Tibial artery (tissue), 4 donors: ENCODE measurements at regions of chr1 and their contacts with region 1.

Region 1: DNA sequence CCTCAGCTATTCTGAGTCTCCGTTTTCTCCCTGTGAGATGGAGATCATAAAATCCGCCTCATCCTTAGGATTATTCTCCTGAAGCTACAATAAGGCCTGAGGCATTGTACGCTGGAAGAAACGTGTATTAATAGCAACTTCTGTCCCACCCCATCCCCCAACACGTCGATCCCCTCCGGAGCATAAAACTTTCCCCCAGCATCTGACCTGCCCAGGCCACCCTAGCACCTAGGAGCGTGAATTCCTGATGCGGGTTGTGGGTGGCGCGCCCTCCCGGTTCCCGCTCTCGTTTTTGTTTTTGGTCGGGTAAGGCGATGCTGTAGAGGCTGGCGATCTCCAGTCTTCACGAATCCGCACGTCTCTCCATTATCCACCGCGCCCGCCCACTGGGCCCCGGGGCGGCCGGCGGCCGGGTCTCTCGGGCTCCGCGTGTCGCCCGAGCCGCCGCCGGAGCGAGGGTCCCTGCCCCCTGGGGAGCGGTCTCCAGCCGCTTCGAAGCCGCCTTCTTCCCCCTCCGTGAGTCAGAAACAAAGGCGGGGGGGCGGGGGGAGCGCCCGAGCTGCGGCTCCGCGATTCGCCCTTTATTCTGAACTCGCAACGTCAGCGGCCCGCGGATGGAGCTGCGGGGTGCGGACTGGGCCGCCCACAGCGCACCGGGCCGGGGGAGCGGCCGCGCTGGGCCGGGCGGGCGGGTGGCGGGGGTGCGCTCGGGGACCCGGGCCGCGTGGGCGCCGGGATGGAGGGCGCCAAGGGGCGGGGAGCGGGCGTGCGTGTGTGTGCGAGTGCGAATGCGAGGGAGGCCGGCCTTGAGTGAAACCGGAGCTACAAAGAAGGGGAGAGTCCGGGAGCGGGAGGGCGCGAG is at the start of gene PLEKHO1:
- DNase-seq: peak; percentile 90 to 97
- H3K4me3 ChIP-seq: peak within 1 kb of the TSS; percentile 86 to 95
- H3K27ac ChIP-seq: peak within 1 kb of the TSS; percentile 98
- H3K4me1 ChIP-seq: peaks cover 0 to 40% (median 23%) of the 10 kb centered on the region in 4 donors
- H3K27me3 ChIP-seq: no peaks in the 10 kb centered on the region
- CTCF ChIP-seq: no peak

Region 2: DNA sequence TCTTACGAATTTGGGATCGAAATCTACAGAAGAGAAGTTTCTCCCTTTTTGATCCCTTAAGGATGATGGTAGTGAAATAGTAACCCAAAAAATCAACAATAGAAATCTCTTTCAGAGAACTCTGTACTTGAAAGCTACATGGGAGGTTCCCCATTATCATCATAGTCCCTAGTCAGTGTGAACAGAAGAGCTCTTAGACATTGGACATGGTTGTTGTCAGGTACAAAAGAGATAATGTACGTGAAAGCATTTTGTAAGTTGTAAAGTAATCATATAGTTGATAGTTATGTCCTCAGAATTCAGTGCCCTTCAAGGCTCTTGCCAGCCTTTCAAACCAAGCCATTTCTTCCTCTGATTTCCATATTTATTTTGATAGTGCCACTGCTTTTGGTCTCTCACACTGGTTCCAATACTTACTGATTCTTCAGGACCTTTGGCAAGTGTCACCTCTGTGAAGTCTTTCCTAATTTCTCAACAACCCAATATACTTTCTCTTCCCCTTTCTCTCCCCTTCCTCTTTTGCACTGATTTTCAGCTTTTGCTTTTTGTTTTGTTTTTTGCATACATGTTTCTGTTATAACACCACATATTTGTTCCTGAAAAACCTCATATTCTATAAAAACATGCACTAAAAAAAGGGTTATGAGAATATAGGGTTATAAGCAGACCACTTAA is 59.5 kb before region 1 on chr1:
- intact Hi-C with region 1: loop called (anchors 10 kb)
- DNase-seq: no peak
- H3K4me3 ChIP-seq: no peak overlapping the region
- H3K27ac ChIP-seq: no peak overlapping the region
- H3K4me1 ChIP-seq: peaks cover 0 to 29% (median 6%) of the 10 kb centered on the region in 4 donors
- H3K27me3 ChIP-seq: no peaks in the 10 kb centered on the region
- CTCF ChIP-seq: no peak

Region 3: GRCh38 chr1:150106341-150106740 is 43.2 kb before region 1 on chr1:
- intact Hi-C with region 1: no loop called
- DNase-seq: no peak
- H3K4me3 ChIP-seq: no peak overlapping the region
- H3K27ac ChIP-seq: no peak overlapping the region
- H3K4me1 ChIP-seq: no peaks in the 10 kb centered on the region
- H3K27me3 ChIP-seq: no peaks in the 10 kb centered on the region
- CTCF ChIP-seq: no peak